ENCODE measurements at regions of chr10 and their contacts with region 1.

Region 1: DNA sequence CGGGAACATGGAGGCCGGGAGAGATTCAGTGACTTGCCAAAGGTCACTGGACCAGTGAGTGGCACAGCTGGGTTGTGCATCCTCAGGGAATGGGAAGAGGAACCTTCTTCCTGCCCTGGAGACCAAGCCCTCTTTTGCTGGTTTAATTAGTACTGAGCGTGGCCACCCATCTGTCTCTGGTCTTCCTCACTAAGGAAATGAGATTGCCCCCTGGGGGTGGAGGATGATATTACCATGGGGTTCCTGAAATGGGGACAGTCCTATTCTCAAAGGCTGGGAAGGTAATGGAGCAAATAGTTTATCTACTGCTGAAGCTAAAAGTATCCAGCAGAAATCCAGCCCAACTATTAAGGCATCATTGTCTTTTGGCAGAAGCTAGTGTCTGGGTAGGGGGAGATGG is 98.6 kb upstream of the FGFR2 start:
- DNase-seq: peak; percentile 45
- H3K4me3 ChIP-seq: no peak overlapping the region
- H3K27ac ChIP-seq: no peak overlapping the region
- H3K4me1 ChIP-seq: peaks cover 0 to 25% of the 10 kb centered on the region in 2 experiments; a peak in 2 of 4 replicates
- H3K27me3 ChIP-seq: no peaks in the 10 kb centered on the region
- CTCF ChIP-seq: peak; percentile 52
- EP300 ChIP-seq: no peak
- RAD21 ChIP-seq: peak; percentile 29; the same call in 1 of the 2 replicates

Region 2: GRCh38 chr10:121681997-121682687 is 14.7 kb before region 1 on chr10:
- CTCF ChIA-PET with region 1: interaction called, 14 read pairs
- POLR2A ChIA-PET with region 1: no interaction called
- DNase-seq: no peak
- H3K4me3 ChIP-seq: no peak overlapping the region
- H3K27ac ChIP-seq: no peak overlapping the region
- H3K4me1 ChIP-seq: peaks cover 0 to 16% of the 10 kb centered on the region in 2 experiments; a peak in 2 of 4 replicates
- H3K27me3 ChIP-seq: no peaks in the 10 kb centered on the region
- CTCF ChIP-seq: no peak
- EP300 ChIP-seq: no peak
- RAD21 ChIP-seq: no peak

Region 3: DNA sequence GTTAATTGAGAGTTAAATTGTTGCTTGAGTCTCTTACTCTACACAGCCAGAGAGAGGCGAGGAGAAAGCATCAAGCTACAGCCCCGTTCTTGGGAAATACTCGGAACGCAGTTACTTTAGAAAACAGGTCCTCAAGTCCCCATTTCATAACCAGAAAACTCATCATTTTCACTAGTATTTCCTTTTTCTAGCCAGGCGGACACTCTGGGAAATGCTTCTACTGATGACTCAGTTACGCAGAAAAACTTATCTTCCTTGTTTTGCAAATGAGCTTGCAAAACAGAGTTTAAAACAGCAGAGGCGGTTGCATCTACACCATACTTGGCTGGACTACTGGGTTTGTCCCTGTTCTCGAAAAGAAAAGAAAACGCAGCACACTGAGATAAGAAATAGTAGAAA is 12.8 kb after region 1 on chr10:
- CTCF ChIA-PET with region 1: interaction called, 10 read pairs
- POLR2A ChIA-PET with region 1: no interaction called
- DNase-seq: no peak
- H3K4me3 ChIP-seq: no peak overlapping the region
- H3K27ac ChIP-seq: peak overlapping the region; percentile 30 to 90; a peak in 3 of 4 replicates
- H3K4me1 ChIP-seq: peaks cover 0 to 19% of the 10 kb centered on the region in 2 experiments; a peak in 2 of 4 replicates
- H3K27me3 ChIP-seq: no peaks in the 10 kb centered on the region
- CTCF ChIP-seq: no peak
- EP300 ChIP-seq: no peak
- RAD21 ChIP-seq: no peak

Region 4: GRCh38 chr10:121771966-121772365 is 75.1 kb after region 1 on chr10:
- CTCF ChIA-PET with region 1: no interaction called
- POLR2A ChIA-PET with region 1: no interaction called
- DNase-seq: no peak
- H3K4me3 ChIP-seq: no peak overlapping the region
- H3K27ac ChIP-seq: no peak overlapping the region
- H3K4me1 ChIP-seq: peaks cover 0 to 15% of the 10 kb centered on the region in 2 experiments; a peak in 2 of 4 replicates
- H3K27me3 ChIP-seq: no peaks in the 10 kb centered on the region
- CTCF ChIP-seq: no peak
- EP300 ChIP-seq: no peak
- RAD21 ChIP-seq: no peak

Region 5: GRCh38 chr10:121792198-121792597 is 95.3 kb after region 1 on chr10:
- CTCF ChIA-PET with region 1: no interaction called
- POLR2A ChIA-PET with region 1: no interaction called
- DNase-seq: no peak
- H3K4me3 ChIP-seq: no peak overlapping the region
- H3K27ac ChIP-seq: no peak overlapping the region
- H3K4me1 ChIP-seq: peaks cover 0 to 6% of the 10 kb centered on the region in 2 experiments; a peak in 2 of 4 replicates
- H3K27me3 ChIP-seq: no peaks in the 10 kb centered on the region
- CTCF ChIP-seq: no peak
- EP300 ChIP-seq: no peak
- RAD21 ChIP-seq: no peak

Measured in SK-N-SH (cell line).